B cell (primary cell): ENCODE measurements at regions of chr11 and their contacts with region 1.

Region 1: DNA sequence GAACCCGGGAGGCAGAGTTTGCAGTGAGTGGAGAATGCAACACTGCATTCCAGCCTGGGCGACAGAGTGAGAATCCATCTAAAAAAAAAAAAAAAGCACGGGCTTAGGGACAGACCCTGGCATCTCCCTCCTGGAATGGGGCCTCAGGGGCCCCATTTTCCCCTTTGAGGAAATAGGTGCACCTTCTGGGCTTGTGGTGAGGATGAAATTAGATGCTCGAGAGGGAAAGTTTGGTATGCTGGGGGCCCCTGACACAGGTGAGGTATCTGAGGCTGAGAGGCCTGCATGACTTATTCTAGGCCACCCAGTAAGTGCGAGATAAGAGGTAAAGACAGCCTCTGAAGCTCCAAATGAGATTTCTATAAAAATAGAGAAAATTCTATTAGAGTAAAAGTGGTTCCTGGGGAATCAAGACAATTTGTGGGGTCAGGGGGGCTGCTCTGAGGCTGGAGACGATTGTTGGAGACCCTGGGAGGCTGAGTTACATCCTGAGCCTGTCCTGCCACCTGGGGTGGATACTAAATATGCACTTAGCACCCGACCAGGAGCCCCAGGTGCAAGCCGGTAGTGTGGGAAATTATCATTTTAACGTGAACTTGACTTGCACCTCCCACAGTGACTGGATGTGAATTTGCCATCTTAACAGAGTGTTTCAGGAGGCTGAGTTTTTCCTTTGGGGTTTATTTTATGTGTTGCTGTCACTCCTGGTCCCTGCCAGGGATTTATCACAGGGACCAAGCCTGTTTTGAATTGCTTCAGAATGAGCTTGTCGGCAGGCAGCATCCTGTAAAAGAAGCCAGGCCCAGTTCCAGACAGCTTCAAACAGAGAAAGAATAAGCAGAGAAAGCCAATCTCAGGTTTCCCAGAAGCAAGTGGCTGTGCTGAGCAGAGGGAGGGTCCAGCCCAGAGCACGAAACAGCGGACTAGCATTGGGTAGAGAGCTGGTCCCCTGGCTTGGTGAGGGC is 48.4 kb upstream of the TSKU start:
- DNase-seq: no peak
- ATAC-seq: no peak
- H3K4me3 ChIP-seq: no peak overlapping the region
- H3K4me3 Mint-ChIP-seq: no peak overlapping the region
- H3K27ac ChIP-seq: no peak overlapping the region
- H3K27ac Mint-ChIP-seq: no peak overlapping the region
- H3K4me1 ChIP-seq: no peaks in the 10 kb centered on the region
- H3K4me1 Mint-ChIP-seq: no peaks in the 10 kb centered on the region
- H3K27me3 ChIP-seq: peaks cover 0 to under 1% (median 0%) of the 10 kb centered on the region in 4 experiments
- H3K27me3 Mint-ChIP-seq: peaks cover 23% of the 10 kb centered on the region
- CTCF ChIP-seq: no peak

Region 2: DNA sequence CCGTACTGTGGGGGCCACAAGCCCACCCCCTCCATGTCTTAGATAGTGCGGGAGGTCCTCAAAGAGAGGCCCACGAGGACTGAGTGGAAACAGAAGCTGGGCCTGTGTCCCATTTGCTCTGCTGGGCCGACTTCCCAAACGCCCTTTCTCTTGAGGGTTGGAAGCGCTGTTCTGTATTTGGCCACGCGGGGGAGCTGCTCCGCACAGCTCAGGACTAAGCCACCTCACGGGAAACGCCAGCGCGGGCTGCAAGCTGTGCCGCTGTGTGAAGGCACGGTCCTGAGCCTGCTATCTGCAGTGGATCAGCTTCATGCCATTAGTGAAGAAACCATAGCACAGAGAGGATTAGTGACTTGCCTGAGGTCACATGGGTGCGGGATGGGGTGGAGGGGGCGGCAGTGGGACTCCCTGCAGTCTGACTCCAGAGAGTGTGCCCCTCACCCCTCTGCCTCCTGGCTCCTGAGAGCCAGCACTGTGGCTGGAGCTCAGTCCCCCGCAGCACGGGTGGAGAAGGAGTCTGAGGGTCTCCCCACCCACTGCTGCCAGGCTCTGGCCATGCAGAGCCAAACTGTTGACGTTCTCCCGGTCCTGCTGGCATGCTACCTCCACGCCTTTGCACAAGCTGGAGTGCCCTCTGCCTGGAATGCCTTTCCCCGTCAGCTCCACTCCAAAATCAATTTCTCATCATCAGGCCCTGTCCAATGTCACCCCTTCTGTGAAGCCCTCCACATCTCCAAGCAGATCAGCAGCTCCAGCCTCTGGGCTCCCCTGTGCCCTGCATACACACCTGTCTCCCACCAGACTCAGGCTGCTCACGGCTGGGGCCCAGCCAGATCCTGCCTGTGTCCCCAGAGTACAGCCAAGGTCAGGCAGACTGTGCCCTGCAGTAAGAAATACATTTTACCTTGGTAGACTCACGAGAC is 12.7 kb before region 1 on chr11:
- CTCF ChIA-PET with region 1: interaction called, 24 read pairs
- POLR2A ChIA-PET with region 1: no interaction called
- intact Hi-C with region 1: no loop called
- DNase-seq: peak; percentile 77
- ATAC-seq: peak; percentile 76
- H3K4me3 ChIP-seq: no peak overlapping the region
- H3K4me3 Mint-ChIP-seq: no peak overlapping the region
- H3K27ac ChIP-seq: no peak overlapping the region
- H3K27ac Mint-ChIP-seq: no peak overlapping the region
- H3K4me1 ChIP-seq: peaks cover 5 to 8% of the 10 kb centered on the region in 2 donors
- H3K4me1 Mint-ChIP-seq: peaks cover 7% of the 10 kb centered on the region
- H3K27me3 ChIP-seq: peaks cover 0 to 28% (median 10%) of the 10 kb centered on the region in 4 experiments
- H3K27me3 Mint-ChIP-seq: peaks cover 42% of the 10 kb centered on the region
- CTCF ChIP-seq: peak; percentile 88

Region 3: GRCh38 chr11:76799066-76799804 is 64.5 kb after region 1 on chr11:
- CTCF ChIA-PET with region 1: interaction called, 43 read pairs
- POLR2A ChIA-PET with region 1: no interaction called
- intact Hi-C with region 1: no loop called
- DNase-seq: peak; percentile 78
- ATAC-seq: peak; percentile 95
- H3K4me3 ChIP-seq: peak overlapping the region in 4 of 5 experiments; percentile 23 to 45 (median 40)
- H3K4me3 Mint-ChIP-seq: peak overlapping the region; percentile 64
- H3K27ac ChIP-seq: no peak overlapping the region
- H3K27ac Mint-ChIP-seq: no peak overlapping the region
- H3K4me1 ChIP-seq: peaks cover 5 to 10% of the 10 kb centered on the region in 2 donors
- H3K4me1 Mint-ChIP-seq: peaks cover 11% of the 10 kb centered on the region
- H3K27me3 ChIP-seq: peaks cover 0 to 13% (median 1%) of the 10 kb centered on the region in 4 experiments
- H3K27me3 Mint-ChIP-seq: peaks cover 25% of the 10 kb centered on the region
- CTCF ChIP-seq: peak; percentile 93

Region 4: DNA sequence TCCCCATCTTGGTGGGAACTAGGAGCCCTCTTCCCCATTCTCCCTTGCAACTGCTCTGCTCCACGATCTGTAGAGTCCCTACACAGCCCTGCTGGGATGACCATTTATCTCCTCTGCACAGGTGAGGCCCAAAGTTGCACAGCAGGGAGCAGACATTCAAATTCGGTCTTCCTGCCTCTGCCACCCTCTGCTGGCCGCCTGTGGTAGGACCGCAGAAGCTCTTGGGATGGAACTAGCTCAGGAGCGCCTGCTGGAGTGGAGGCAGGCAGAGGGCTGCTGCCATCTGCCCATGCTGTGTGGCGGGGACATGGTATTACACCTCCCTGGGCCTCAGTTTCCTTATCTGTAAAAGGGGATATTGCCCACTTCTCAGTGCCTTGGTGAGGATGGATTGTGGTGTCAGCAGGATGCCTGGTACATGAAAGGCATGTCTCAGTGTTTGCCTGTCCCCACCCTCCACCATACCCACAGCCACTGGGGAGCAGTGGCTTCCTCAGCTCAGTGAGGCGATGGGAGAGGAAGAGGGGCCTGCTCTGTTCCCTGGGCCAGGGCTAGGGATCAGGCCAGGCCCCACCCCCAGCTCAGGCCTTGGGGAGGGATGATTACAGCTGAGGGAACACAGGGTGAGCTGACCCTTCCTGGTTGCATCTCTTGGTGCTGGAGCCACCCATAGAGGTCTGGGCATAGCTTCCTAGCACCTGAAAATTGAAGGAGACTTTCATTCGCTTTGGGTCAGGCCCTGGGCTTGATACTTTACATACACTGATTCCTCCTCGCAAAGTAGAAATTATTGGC is 356.6 kb after region 1 on chr11:
- CTCF ChIA-PET with region 1: interaction called, 13 read pairs
- POLR2A ChIA-PET with region 1: no interaction called
- intact Hi-C with region 1: no loop called
- DNase-seq: peak; percentile 75
- ATAC-seq: peak; percentile 91
- H3K4me3 ChIP-seq: no peak overlapping the region
- H3K4me3 Mint-ChIP-seq: no peak overlapping the region
- H3K27ac ChIP-seq: no peak overlapping the region
- H3K27ac Mint-ChIP-seq: no peak overlapping the region
- H3K4me1 ChIP-seq: no peaks in the 10 kb centered on the region
- H3K4me1 Mint-ChIP-seq: no peaks in the 10 kb centered on the region
- H3K27me3 ChIP-seq: no peaks in the 10 kb centered on the region
- H3K27me3 Mint-ChIP-seq: no peaks in the 10 kb centered on the region
- CTCF ChIP-seq: peak; percentile 84